CD14-positive monocyte (primary cell): ENCODE measurements at regions of chr5 and their contacts with region 1.

Region 1: DNA sequence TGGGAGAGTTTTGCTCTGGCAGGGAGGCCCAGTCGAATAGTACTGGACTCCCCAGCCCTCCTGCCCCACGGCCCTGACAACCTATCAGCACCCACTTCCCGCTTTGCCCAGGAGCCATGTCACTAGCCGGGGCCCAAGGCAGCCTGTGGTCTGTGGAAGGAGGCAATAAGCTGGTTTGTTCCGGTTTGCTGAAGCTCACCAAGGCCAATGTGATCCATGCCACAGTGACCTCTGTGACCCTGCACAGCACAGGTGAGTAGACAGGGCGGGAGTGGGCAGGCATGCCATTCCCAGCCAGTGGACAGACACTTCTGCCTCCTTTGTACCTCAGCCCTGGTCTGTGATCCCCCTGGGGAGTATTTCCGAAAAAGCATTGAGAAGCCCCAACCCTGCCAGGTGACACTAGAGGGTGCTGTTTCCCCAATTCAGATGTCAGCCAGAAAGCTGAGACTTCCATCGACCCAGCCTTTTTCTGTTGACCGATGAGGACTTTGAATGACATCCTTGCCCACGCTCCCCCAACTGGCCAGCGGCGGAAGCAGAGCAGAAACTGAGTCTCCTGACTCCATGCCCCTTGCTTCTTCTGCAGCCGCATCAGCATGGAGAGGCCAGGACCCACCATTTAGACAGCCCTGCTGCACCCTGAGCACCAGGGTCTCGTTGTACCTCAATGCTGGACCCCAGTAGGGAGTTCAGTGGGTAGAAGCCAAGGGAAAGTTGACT is 9.6 kb downstream of the PCYOX1L start:
- DNase-seq: peak; percentile 22 to 41 (median 41)
- H3K4me3 ChIP-seq: no peak overlapping the region
- H3K4me3 Mint-ChIP-seq: no peak overlapping the region
- H3K27ac ChIP-seq: no peak overlapping the region
- H3K27ac Mint-ChIP-seq: peak overlapping the region in 1 of 7 donors; percentile 72
- H3K4me1 ChIP-seq: no peaks in the 10 kb centered on the region
- H3K4me1 Mint-ChIP-seq: peaks cover 13% of the 10 kb centered on the region
- H3K27me3 ChIP-seq: no peaks in the 10 kb centered on the region
- H3K27me3 Mint-ChIP-seq: peaks cover 0 to 4% (median 2%) of the 10 kb centered on the region in 3 donors
- CTCF ChIP-seq: peak; percentile 79

Region 2: DNA sequence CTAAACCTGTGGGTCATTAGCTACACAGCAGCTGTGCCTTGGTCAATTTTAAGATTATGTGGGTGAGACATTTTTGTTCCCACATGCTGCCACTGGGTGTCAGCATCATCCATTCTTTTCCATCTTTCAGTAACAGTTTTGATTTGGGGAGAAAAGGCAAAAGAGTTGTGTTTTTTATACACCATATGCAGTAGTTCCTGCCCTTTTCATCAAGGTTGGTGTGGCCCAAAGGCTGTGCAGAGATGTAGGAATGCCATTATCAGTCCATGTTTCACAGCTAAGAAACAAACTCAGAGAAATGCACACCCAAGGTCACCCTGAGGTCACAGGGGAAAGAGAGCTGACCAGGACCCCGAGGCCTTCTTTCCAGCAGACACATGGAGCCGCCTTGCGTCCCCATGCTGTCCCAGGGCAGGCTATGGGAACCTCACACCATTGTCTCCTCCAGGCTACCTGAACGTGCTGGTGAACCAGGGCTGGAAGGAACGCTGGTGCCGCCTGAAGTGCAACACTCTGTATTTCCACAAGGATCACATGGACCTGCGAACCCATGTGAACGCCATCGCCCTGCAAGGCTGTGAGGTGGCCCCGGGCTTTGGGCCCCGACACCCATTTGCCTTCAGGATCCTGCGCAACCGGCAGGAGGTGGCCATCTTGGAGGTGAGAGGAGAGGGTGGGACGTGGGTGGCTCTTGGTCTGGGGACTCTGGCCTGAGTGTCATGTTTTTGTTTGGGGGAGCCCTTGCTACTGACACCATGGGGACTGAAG is 49.9 kb before region 1 on chr5:
- intact Hi-C with region 1: loop called (anchors 2 to 5 kb)
- DNase-seq: peak; percentile 16 to 30 (median 18)
- H3K4me3 ChIP-seq: no peak overlapping the region
- H3K4me3 Mint-ChIP-seq: no peak overlapping the region
- H3K27ac ChIP-seq: no peak overlapping the region
- H3K27ac Mint-ChIP-seq: no peak overlapping the region
- H3K4me1 ChIP-seq: no peaks in the 10 kb centered on the region
- H3K4me1 Mint-ChIP-seq: no peaks in the 10 kb centered on the region
- H3K27me3 ChIP-seq: no peaks in the 10 kb centered on the region
- H3K27me3 Mint-ChIP-seq: peaks cover 0 to 6% (median 2%) of the 10 kb centered on the region in 3 donors
- CTCF ChIP-seq: peak; percentile 79

Region 3: GRCh38 chr5:149514512-149514911 is 147.1 kb after region 1 on chr5:
- intact Hi-C with region 1: no loop called
- DNase-seq: no peak
- H3K4me3 ChIP-seq: no peak overlapping the region
- H3K4me3 Mint-ChIP-seq: no peak overlapping the region
- H3K27ac ChIP-seq: peak overlapping the region in 1 of 2 donors; percentile 1
- H3K27ac Mint-ChIP-seq: peak overlapping the region in 1 of 7 donors; percentile 50
- H3K4me1 ChIP-seq: no peaks in the 10 kb centered on the region
- H3K4me1 Mint-ChIP-seq: peaks cover 7% of the 10 kb centered on the region
- H3K27me3 ChIP-seq: no peaks in the 10 kb centered on the region
- H3K27me3 Mint-ChIP-seq: no peaks in the 10 kb centered on the region
- CTCF ChIP-seq: no peak

Region 4: GRCh38 chr5:149537374-149537975 is 170.1 kb after region 1 on chr5:
- intact Hi-C with region 1: no loop called
- DNase-seq: no peak
- H3K4me3 ChIP-seq: no peak overlapping the region
- H3K4me3 Mint-ChIP-seq: no peak overlapping the region
- H3K27ac ChIP-seq: peak overlapping the region in 1 of 2 donors; percentile 11
- H3K27ac Mint-ChIP-seq: peak overlapping the region in 5 of 7 donors; percentile 8 to 57 (median 36)
- H3K4me1 ChIP-seq: no peaks in the 10 kb centered on the region
- H3K4me1 Mint-ChIP-seq: peaks cover 16% of the 10 kb centered on the region
- H3K27me3 ChIP-seq: no peaks in the 10 kb centered on the region
- H3K27me3 Mint-ChIP-seq: peaks cover 0 to 3% (median 2%) of the 10 kb centered on the region in 3 donors
- CTCF ChIP-seq: no peak

Region 5: GRCh38 chr5:149567226-149567625 is 199.8 kb after region 1 on chr5:
- intact Hi-C with region 1: loop called in 1 of 2 experiments (anchors 5 kb)
- DNase-seq: no peak
- H3K4me3 ChIP-seq: no peak overlapping the region
- H3K4me3 Mint-ChIP-seq: no peak overlapping the region
- H3K27ac ChIP-seq: no peak overlapping the region
- H3K27ac Mint-ChIP-seq: no peak overlapping the region
- H3K4me1 ChIP-seq: no peaks in the 10 kb centered on the region
- H3K4me1 Mint-ChIP-seq: no peaks in the 10 kb centered on the region
- H3K27me3 ChIP-seq: no peaks in the 10 kb centered on the region
- H3K27me3 Mint-ChIP-seq: peaks cover 0 to 3% (median 1%) of the 10 kb centered on the region in 3 donors
- CTCF ChIP-seq: no peak